CD8-positive, alpha-beta T cell (primary cell): ENCODE measurements at regions of chr12 and their contacts with region 1.

Region 1: DNA sequence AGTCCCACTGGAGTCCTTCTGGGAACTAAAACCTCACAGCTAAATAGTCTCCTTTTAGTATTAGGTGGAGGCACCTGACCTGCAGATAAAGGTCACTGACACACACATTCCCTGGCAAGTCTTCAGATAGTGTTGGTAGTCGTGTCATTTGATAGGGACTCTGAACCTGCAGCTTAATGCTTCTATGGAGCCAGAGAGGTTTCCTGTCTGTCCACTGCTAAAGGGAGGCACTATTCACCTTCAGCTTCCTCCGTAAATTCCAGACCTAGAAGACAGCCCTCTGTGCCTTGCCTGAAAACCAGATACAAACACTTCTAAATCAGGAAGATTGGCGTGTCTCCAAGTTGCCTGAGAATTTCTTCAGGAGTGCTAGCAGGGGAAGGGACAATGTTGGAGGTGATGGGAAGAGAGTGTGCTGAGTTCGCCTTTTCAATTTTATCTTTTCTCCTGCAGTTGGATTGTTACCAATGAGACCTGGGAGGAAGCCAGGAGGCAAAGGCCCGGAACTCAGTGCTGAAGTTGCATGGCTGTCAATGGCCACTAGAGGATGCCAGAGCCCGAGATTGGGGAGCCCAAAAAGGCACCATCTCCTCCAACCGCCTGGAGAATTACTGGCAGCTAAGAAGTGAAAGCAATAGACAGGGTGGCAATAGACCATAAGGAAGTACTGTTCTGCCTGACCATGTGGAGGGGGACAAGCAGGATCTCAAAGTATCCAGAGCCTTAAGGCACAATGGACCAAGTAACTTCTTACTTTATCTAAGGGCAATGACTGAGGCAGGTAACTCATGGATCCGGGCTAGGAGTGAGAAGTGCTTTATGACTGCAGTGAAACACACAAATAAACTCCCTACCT is 81.6 kb upstream of the SCAF11 start:
- DNase-seq: peak; percentile 27 to 75 (median 57)
- ATAC-seq: peak; percentile 89
- H3K4me3 ChIP-seq: no peak overlapping the region
- H3K4me3 Mint-ChIP-seq: no peak overlapping the region
- H3K27ac ChIP-seq: no peak overlapping the region
- H3K27ac Mint-ChIP-seq: no peak overlapping the region
- H3K4me1 ChIP-seq: no peaks in the 10 kb centered on the region
- H3K4me1 Mint-ChIP-seq: no peaks in the 10 kb centered on the region
- H3K27me3 ChIP-seq: no peaks in the 10 kb centered on the region
- H3K27me3 Mint-ChIP-seq: peaks cover 7% of the 10 kb centered on the region
- CTCF ChIP-seq: peak; percentile 88

Region 2: GRCh38 chr12:46933947-46934346 is 862.0 kb after region 1 on chr12:
- CTCF ChIA-PET with region 1: no interaction called
- POLR2A ChIA-PET with region 1: no interaction called
- intact Hi-C with region 1: loop called in 1 of 2 experiments (anchors 5 kb)
- DNase-seq: peak in 2 of 9 experiments; percentile 14 to 43
- ATAC-seq: no peak
- H3K4me3 ChIP-seq: no peak overlapping the region
- H3K4me3 Mint-ChIP-seq: no peak overlapping the region
- H3K27ac ChIP-seq: no peak overlapping the region
- H3K27ac Mint-ChIP-seq: no peak overlapping the region
- H3K4me1 ChIP-seq: no peaks in the 10 kb centered on the region
- H3K4me1 Mint-ChIP-seq: no peaks in the 10 kb centered on the region
- H3K27me3 ChIP-seq: no peaks in the 10 kb centered on the region
- H3K27me3 Mint-ChIP-seq: peaks cover 16% of the 10 kb centered on the region
- CTCF ChIP-seq: peak; percentile 20

Region 3: DNA sequence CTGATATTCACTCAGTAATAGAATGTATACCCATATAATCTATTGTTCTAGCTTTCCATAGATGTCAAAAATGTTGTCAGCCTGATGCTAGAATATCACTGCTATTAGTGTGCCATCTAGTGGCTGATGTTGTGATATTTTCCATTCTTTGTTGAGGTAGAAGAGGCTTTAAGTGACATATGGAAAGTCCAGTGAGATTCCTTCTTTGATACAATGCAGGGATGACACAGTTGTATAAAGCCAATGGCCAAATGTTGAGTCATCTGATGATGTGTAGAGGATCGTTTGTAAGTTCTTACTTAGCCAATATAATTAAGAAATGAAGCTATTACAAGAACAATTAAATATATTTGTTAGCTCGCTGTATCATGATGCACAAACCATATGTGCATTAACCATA is 949.3 kb after region 1 on chr12:
- CTCF ChIA-PET with region 1: no interaction called
- POLR2A ChIA-PET with region 1: no interaction called
- intact Hi-C with region 1: loop called (anchors 1 to 2 kb)
- DNase-seq: peak in 3 of 9 experiments; percentile 11 to 70 (median 58)
- ATAC-seq: no peak
- H3K4me3 ChIP-seq: no peak overlapping the region
- H3K4me3 Mint-ChIP-seq: no peak overlapping the region
- H3K27ac ChIP-seq: no peak overlapping the region
- H3K27ac Mint-ChIP-seq: no peak overlapping the region
- H3K4me1 ChIP-seq: no peaks in the 10 kb centered on the region
- H3K4me1 Mint-ChIP-seq: no peaks in the 10 kb centered on the region
- H3K27me3 ChIP-seq: no peaks in the 10 kb centered on the region
- H3K27me3 Mint-ChIP-seq: peaks cover 16% of the 10 kb centered on the region
- CTCF ChIP-seq: peak; percentile 75

Region 4: GRCh38 chr12:47038270-47038748 is 966.3 kb after region 1 on chr12:
- CTCF ChIA-PET with region 1: no interaction called
- POLR2A ChIA-PET with region 1: no interaction called
- intact Hi-C with region 1: no loop called
- DNase-seq: no peak
- ATAC-seq: no peak
- H3K4me3 ChIP-seq: no peak overlapping the region
- H3K4me3 Mint-ChIP-seq: no peak overlapping the region
- H3K27ac ChIP-seq: no peak overlapping the region
- H3K27ac Mint-ChIP-seq: no peak overlapping the region
- H3K4me1 ChIP-seq: no peaks in the 10 kb centered on the region
- H3K4me1 Mint-ChIP-seq: peaks cover 14% of the 10 kb centered on the region
- H3K27me3 ChIP-seq: no peaks in the 10 kb centered on the region
- H3K27me3 Mint-ChIP-seq: no peaks in the 10 kb centered on the region
- CTCF ChIP-seq: no peak